ENCODE measurements at regions of chr16 and their contacts with region 1.

Region 1: DNA sequence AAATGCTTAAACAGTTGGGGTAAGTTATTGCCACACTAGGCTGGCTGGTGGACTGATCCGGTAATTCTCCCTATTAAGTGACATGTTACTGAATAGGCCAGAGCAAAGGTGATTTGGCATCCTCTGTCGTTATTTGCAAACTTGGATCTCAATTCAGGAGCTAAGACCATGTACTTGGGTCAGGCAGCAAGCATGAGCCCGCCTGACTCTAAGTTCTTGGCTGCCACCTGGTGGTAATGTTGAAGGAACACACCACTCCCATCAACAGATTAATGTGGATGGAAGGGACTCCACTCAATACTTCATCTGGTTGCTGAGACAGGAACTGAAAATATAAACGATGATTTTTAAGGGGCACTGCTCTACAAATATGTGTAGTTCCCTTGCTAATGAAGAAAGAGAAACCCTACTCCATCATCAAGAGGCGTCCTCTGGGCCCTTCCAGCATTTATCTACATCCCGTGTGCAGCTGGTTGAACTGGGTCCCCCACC is 70.8 kb downstream of the EMP2 start:
- DNase-seq: no peak
- H3K4me3 ChIP-seq: no peak overlapping the region
- H3K27ac ChIP-seq: no peak overlapping the region
- H3K4me1 ChIP-seq: peaks cover 2 to 13% (median 4%) of the 10 kb centered on the region in 6 donors
- H3K27me3 ChIP-seq: no peaks in the 10 kb centered on the region
- CTCF ChIP-seq: peak; percentile 72 to 92 (median 84)
- POLR2A ChIP-seq: no peak

Region 2: DNA sequence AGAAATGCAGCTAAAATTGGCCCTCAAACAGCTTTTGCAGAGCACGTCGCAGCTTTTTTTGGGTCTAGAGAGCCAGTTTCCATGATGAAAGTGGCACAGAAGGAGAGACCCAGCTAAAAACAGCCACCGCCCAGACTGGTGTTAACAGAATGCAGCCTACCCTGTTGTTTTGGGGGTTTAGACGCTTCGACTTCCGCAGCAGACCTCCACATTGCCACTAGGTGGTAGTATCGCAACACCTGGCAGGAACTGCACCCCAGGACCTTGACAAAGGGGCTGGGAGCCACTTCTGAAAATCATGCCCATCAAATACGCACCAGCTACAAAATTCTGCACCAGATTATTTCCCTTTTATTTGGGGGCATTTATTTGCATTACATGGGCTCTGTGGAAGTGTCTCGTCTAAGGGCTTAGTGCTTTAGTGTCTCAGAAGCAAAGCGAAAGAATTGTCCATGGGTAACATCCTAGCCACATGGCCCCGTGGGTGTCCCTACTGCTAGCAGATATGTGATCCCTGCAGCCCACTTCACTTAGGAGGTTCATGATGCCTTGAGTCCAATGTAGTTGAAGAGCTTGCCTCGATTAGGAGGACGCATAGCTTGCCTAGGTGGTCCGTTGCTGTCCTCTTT is 1251.0 kb before region 1 on chr16:
- intact Hi-C with region 1: loop called (anchors 5 kb)
- DNase-seq: no peak
- H3K4me3 ChIP-seq: no peak overlapping the region
- H3K27ac ChIP-seq: no peak overlapping the region
- H3K4me1 ChIP-seq: no peaks in the 10 kb centered on the region
- H3K27me3 ChIP-seq: peaks cover 0 to 53% (median 0%) of the 10 kb centered on the region in 7 donors
- CTCF ChIP-seq: peak in 6 of 11 experiments; percentile 11 to 53 (median 32)
- POLR2A ChIP-seq: no peak

Region 3: DNA sequence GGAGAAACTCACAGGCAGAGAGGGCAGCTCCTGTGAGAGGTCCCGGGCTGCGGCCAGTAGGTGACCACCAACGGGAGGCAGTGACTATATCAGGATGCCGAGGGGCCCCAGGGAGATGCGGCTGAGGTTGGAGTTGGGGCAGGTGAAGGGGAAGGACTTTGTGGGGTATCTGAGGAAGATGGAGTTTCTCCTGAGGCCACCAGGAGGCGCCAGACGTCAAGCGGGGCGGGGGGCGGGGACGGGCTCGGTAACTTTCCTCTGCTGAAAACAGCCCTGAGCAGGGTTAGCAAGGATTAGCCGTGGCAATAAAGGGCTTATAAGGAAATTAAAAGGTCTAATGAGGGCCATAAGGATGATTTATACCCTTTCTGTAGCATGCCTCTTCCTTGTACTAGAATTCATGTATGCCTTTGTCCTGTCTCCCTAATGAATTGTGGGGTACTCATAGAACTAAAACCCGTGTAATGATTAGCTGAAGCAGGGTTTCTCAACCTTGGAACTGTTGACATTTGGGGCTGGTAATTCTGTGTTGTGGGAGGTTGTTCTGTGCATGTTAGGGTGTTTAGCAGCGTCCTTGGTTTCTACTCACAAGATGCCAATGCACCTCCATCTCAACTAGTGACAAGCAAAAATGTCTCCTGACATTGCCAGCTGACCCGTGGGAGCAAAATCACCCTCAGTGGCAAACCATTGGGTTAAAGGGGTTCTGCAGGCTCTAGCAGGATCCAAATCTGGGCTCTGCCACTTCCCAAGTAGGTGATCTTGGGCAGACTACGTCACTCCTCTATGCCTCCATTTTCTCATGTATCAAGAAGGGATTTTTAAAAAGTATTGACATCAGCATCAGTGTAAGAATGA is 252.6 kb before region 1 on chr16:
- intact Hi-C with region 1: loop called (anchors 5 kb)
- DNase-seq: peak; percentile 81
- H3K4me3 ChIP-seq: peak overlapping the region in 1 of 8 donors; percentile 27
- H3K27ac ChIP-seq: peak overlapping the region in 1 of 8 donors; percentile 6
- H3K4me1 ChIP-seq: peaks cover 0 to 31% (median 8%) of the 10 kb centered on the region in 6 donors
- H3K27me3 ChIP-seq: peaks cover 0 to 11% (median 0%) of the 10 kb centered on the region in 7 donors
- CTCF ChIP-seq: peak; percentile 36 to 84 (median 81)
- POLR2A ChIP-seq: no peak

Region 4: DNA sequence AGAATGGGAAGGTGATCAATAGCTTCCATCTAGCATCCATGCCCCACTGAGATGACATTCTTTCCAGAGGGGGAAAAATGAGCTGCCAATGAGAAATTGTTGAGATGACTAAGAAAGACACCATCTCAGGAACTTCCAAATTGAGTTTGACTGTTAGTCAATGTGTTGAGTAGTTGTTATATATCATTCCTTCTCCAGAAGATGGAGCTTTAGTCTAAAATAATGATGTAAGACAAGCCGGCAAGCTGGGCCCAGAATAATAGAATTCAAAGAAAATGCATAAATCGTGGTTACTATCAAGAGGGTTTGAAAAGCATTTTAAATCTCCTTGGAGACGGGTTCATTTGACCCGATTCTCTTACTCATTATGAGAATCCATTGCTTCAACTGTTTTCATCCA is 194.8 kb before region 1 on chr16:
- intact Hi-C with region 1: loop called (anchors 2 kb)
- DNase-seq: no peak
- H3K4me3 ChIP-seq: no peak overlapping the region
- H3K27ac ChIP-seq: no peak overlapping the region
- H3K4me1 ChIP-seq: peaks cover 0 to 21% (median 5%) of the 10 kb centered on the region in 6 donors
- H3K27me3 ChIP-seq: no peaks in the 10 kb centered on the region
- CTCF ChIP-seq: peak in 6 of 11 experiments; percentile 6 to 41 (median 30)
- POLR2A ChIP-seq: no peak

Region 5: DNA sequence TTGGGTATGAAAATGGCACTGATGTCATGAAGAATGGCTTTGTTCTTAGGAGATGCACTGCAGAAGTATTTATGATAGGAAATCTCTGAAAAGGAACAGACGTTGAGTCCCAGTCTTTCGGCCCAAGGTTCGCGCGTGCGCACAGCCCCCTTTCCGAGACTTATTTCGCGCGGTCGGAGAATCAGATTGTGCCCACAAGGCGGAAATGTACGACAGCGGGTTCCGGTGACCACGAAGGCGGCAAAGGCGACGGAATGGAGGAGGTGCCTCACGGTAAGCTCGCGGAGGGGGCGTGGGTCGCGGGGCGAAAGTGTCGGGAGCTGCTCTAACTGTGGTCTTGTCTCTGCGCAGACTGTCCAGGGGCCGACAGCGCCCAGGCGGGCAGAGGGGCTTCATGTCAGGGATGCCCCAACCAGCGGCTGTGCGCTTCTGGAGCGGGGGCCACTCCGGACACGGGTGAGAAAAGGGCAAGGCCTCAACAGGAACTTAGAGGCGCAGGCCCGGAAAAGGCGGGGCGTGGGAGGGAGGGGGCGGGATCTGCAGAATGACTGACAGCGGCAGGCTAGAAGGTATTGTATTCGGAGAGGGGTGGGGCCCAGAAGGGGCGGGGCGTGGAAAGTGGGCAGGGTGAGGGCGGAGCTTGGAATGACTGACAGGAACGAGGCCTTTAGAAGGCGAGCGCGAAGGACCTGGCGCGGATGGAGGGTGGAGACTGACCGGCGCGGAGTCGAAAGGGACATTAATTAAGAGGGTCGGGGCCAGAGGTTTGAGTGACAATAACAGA is 234.2 kb after region 1 on chr16 and contains the start of gene NUBP1:
- intact Hi-C with region 1: loop called (anchors 2 kb)
- DNase-seq: peak; percentile 99
- H3K4me3 ChIP-seq: peak within 1 kb of the TSS; percentile 40 to 74 (median 53)
- H3K27ac ChIP-seq: peak within 1 kb of the TSS; percentile 93 to 98 (median 97)
- H3K4me1 ChIP-seq: peaks cover 17 to 72% (median 34%) of the 10 kb centered on the region in 6 donors
- H3K27me3 ChIP-seq: no peaks in the 10 kb centered on the region
- CTCF ChIP-seq: peak in 3 of 11 experiments; percentile 5 to 40 (median 16)
- POLR2A ChIP-seq: peak; percentile 21 to 49 (median 45)
- total RNA-seq, gene NUBP1: 22.8 to 47.5 (median 32.8) TPM

Measured in spleen (tissue), 13 donors.